Adrenal gland (tissue), 19 donors: ENCODE measurements at regions of chr19 and their contacts with region 1.

Region 1: DNA sequence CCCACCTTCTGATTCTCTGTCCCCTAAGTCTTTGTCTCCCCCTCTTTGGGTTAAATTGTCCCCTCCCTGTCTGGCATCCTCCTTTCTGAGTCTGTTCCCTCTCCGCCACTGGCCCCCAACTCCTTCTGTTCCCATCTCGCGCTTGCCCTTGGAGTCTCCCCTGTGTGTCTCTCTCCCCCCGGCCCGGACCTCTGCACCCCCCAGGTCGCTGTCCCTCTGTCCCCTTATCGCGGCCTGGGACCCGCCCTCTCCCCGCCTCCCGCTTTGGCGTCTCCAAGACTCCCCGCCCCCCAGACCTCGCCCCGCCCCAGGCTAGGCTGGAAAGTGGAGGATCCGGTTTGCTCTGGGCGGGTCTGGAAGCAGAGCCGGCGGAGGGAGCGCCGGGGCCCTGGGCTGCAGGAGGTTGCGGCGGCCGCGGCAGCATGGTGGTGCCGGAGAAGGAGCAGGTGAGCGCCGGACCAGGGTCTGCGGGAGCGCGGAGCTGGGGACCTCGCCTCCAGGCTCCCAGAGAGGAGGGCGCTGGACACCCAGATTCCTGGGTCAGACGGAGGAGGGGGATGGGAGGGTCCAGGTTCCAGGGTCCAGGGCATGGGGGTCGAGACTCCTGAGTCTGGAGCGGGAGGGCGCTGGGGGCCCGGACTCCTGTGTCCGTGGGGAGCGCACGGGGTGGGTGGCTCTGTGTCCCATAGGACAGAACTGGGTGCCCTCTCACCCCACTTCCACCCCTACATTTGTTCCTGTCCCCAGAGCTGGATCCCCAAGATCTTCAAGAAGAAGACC is at the start of gene TRPM4:
- DNase-seq: peak; percentile 81 to 94 (median 88)
- H3K4me3 ChIP-seq: peak within 1 kb of the TSS; percentile 57 to 83 (median 69)
- H3K27ac ChIP-seq: peak within 1 kb of the TSS in 2 of 5 donors; percentile 47 to 72
- H3K4me1 ChIP-seq: peaks cover 7 to 9% of the 10 kb centered on the region in 2 donors
- H3K27me3 ChIP-seq: no peaks in the 10 kb centered on the region
- CTCF ChIP-seq: no peak
- POLR2A ChIP-seq: peak in 1 of 2 donors; percentile 28
- total RNA-seq, gene TRPM4: 6.8 to 25.1 (median 15.4) TPM

Region 2: GRCh38 chr19:48480558-48481500 is 676.8 kb before region 1 on chr19:
- intact Hi-C with region 1: no loop called
- DNase-seq: no peak
- H3K4me3 ChIP-seq: peak overlapping the region in 2 of 4 donors; percentile 1 to 48
- H3K27ac ChIP-seq: peak overlapping the region in 4 of 5 donors; percentile 38 to 71 (median 58)
- H3K4me1 ChIP-seq: peaks cover 7 to 18% of the 10 kb centered on the region in 2 donors
- H3K27me3 ChIP-seq: no peaks in the 10 kb centered on the region
- CTCF ChIP-seq: no peak
- POLR2A ChIP-seq: no peak

Region 3: DNA sequence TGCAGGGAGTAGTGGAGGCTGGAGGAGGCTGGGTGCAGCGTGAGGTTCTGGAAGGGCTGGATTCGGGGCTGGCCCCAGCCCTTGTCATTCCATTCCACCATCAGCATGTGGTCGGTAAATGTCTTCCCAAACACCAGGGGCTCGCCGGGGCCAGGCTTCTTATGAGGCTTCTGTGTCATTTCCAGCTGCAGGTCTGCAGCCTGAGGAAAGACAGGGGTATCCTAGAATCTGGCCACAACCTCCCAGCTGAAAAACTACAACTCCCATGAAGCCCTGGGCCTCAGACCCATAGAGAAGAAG is 351.2 kb before region 1 on chr19:
- intact Hi-C with region 1: no loop called
- DNase-seq: peak in 3 of 7 donors; percentile 58 to 78 (median 61)
- H3K4me3 ChIP-seq: no peak overlapping the region
- H3K27ac ChIP-seq: no peak overlapping the region
- H3K4me1 ChIP-seq: peaks cover 8 to 11% of the 10 kb centered on the region in 2 donors
- H3K27me3 ChIP-seq: no peaks in the 10 kb centered on the region
- CTCF ChIP-seq: no peak
- POLR2A ChIP-seq: no peak

Region 4: GRCh38 chr19:49073514-49074378 is 83.9 kb before region 1 on chr19:
- intact Hi-C with region 1: loop called in 1 of 2 experiments (anchors 5 kb)
- DNase-seq: no peak
- H3K4me3 ChIP-seq: no peak overlapping the region
- H3K27ac ChIP-seq: no peak overlapping the region
- H3K4me1 ChIP-seq: no peaks in the 10 kb centered on the region
- H3K27me3 ChIP-seq: peaks cover 43% of the 10 kb centered on the region
- CTCF ChIP-seq: peak in 1 of 6 experiments; percentile 19
- POLR2A ChIP-seq: no peak

Region 5: GRCh38 chr19:49196527-49197240 is 39.0 kb after region 1 on chr19:
- intact Hi-C with region 1: loop called (anchors 5 kb)
- DNase-seq: no peak
- H3K4me3 ChIP-seq: no peak overlapping the region
- H3K27ac ChIP-seq: no peak overlapping the region
- H3K4me1 ChIP-seq: no peaks in the 10 kb centered on the region
- H3K27me3 ChIP-seq: no peaks in the 10 kb centered on the region
- CTCF ChIP-seq: no peak
- POLR2A ChIP-seq: no peak

Region 6: DNA sequence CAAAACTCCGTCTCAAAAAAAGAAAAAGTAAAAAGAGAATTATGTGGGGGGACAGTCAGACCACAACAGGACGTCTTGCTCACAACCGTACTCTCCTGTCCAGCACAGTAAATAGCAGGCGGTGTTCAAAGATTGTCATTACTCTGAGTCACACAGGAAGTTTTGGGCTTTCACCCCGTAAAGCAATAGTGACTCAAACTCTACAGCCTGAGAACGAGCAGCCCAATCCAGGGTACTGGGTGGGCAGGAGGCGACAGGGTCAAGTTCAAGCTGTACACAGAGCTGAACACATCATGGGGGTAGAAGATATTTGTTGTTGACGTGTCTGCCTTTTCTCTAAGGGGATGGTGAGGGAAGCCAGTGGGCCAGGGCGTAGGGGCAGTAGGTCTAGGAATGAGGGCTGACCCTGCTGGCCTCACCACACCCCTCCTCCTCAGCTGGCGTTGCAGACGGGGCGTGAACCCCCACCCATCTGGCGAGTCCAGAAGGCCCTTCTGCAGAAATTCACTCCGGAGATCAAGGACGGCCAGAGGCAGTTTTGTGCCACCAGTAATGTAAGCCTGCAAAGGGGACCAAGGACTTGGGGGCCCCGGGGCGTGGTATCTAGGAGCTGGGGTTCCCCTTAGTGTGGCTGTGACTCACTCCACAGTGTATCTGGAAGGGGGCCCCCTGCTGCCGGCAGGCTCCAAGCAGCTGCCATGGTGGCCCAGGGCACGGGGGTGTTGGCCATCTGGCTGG is 456.6 kb after region 1 on chr19:
- intact Hi-C with region 1: no loop called
- DNase-seq: peak in 4 of 7 donors; percentile 46 to 62 (median 54)
- H3K4me3 ChIP-seq: no peak overlapping the region
- H3K27ac ChIP-seq: peak overlapping the region in 3 of 5 donors; percentile 49 to 71 (median 69)
- H3K4me1 ChIP-seq: peaks cover 14 to 19% of the 10 kb centered on the region in 2 donors
- H3K27me3 ChIP-seq: no peaks in the 10 kb centered on the region
- CTCF ChIP-seq: no peak
- POLR2A ChIP-seq: no peak